HEK293T (cell line): ENCODE measurements at regions of chr6 and their contacts with region 1.

Region 1: GRCh38 chr6:161418463-161418945 is 144.6 kb upstream of the AGPAT4 start:
- DNase-seq: peak; percentile 67

Region 2: GRCh38 chr6:161439093-161439492 is 20.6 kb after region 1 on chr6:
- CTCF ChIA-PET with region 1: interaction called, 11 read pairs
- POLR2A ChIA-PET with region 1: no interaction called
- DNase-seq: no peak

Region 3: DNA sequence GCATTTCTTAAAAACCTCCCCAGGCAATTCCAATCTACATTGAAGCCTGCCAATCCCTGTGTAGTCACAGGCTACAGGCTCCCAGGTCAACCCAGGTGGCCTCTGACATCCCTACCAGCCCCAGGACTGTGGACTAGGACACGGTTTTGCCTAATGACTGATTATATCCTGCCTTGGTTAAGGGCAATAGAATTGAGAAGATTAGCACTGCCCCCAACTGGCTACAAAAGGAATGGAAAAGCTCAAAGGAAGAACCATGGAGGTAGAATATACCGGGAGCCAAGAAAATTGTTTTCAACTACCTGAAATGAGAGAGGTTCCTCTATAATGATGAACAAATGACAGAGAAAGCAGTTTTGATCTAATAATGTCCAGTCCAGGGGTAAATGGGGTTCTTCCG is 276.5 kb after region 1 on chr6:
- CTCF ChIA-PET with region 1: interaction called, 12 read pairs
- POLR2A ChIA-PET with region 1: no interaction called
- DNase-seq: peak; percentile 41

Region 4: DNA sequence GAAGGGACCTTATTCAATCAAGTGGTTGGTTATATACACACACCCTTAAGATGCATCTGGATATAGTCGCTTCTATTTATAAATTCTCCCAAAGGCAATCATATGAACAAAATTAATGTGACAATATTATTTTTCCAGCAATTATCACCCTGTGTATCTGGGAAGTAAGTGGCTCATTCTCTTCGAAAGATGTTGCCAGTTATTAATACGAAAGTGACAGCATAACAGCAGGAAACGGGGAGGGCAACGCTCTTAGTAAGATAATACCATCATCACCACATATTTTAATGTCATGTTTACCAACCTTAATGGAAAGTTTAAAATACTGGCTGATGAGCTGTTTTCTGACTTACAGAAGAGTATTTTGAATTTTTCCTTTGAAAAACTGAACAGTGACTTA is 552.5 kb after region 1 on chr6:
- CTCF ChIA-PET with region 1: no interaction called
- POLR2A ChIA-PET with region 1: no interaction called
- DNase-seq: no peak